ENCODE measurements at regions of chr15 and their contacts with region 1.

Region 1: GRCh38 chr15:75008629-75009326 is 13.4 kb downstream of the SCAMP5 start:
- DNase-seq: no peak
- ATAC-seq: no peak
- H3K4me3 ChIP-seq: no peak overlapping the region
- H3K27ac ChIP-seq: no peak overlapping the region
- H3K4me1 ChIP-seq: no peaks in the 10 kb centered on the region
- CTCF ChIP-seq: no peak
- EP300 ChIP-seq: no peak
- POLR2A ChIP-seq: no peak
- RAD21 ChIP-seq: no peak

Region 2: DNA sequence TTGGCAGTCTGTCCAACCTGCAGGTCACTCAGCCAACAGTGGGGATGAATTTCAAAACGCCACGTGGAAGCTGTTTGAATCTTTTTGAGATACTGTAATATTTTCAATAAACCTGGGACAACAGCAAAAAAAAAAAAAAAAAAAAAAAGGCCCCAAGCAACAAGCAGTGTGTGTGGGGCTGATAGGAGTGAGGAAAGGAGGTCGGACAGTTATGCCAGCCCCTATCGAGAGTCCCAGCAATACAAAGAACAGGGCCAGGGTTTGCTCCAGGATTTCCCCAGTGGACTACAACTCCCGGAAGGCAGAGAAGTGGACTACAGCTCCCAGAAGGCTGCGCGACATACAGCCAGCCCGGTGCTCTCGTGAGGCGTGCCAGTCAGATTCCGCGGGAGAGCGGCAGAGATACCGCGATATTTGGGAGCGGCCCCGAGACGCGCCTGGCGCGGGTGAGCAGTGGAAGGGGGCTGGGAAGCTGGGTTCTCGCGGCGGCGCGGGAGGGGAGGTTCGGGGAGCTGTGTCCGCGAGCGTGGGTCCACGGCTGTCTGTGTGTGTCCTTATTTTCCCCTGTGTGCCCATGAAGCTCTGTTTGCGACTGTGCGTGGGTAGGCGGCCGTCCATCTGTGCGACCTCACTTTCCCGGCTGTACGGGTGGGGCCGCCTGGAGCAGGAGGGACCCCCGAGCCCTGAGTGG is 14.5 kb after region 1 on chr15 and contains the start of gene PPCDC:
- CTCF ChIA-PET with region 1: interaction called, 5 read pairs
- POLR2A ChIA-PET with region 1: interaction called, 12 read pairs
- DNase-seq: peak; percentile 97 to 100
- ATAC-seq: peak; percentile 98 to 99
- H3K4me3 ChIP-seq: peak within 1 kb of the TSS; percentile 71
- H3K27ac ChIP-seq: peak within 1 kb of the TSS; percentile 90 to 94
- H3K4me1 ChIP-seq: peaks cover 4% of the 10 kb centered on the region; the same call in 1 of the 3 replicates
- CTCF ChIP-seq: no peak
- EP300 ChIP-seq: no peak
- POLR2A ChIP-seq: peak; percentile 98
- RAD21 ChIP-seq: no peak
- polyA plus RNA-seq, gene PPCDC: 14.5 and 18.2 TPM in 2 replicates

Region 3: DNA sequence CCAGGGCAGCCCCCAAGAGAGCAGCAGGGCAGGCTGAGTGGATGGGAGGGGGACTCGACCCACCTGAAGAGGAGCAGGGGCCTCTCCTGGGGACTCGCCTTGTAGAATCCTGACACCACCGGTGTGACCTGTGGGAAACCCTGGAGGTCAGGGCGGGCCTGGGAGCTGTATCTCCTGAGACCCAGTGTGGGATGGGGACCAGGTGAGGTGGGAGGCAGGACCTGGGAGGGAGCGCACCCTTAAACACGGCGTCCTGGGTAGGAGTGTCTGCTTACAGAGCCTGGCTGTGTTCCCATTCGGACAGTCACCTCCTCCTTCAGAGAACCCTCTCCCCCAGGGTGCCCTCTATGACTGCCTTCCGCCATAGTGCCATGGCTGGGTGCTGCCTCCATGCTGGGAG is 220.0 kb after region 1 on chr15:
- CTCF ChIA-PET with region 1: no interaction called
- POLR2A ChIA-PET with region 1: no interaction called
- DNase-seq: no peak
- ATAC-seq: no peak
- H3K4me3 ChIP-seq: no peak overlapping the region
- H3K27ac ChIP-seq: no peak overlapping the region
- H3K4me1 ChIP-seq: 0 out of 3 replicates have a peak, but pooled peaks cover 4% of the 10 kb centered on the region
- CTCF ChIP-seq: no peak
- EP300 ChIP-seq: no peak
- POLR2A ChIP-seq: no peak
- RAD21 ChIP-seq: no peak